ENCODE measurements at regions of chr21 and their contacts with region 1.

Region 1: GRCh38 chr21:15592271-15592860 is 137.4 kb upstream of the USP25 start:
- DNase-seq: no peak
- ATAC-seq: no peak

Region 2: GRCh38 chr21:14403681-14404318 is 1188.6 kb before region 1 on chr21:
- intact Hi-C with region 1: loop called in 1 of 2 experiments (anchors 5 kb)
- DNase-seq: no peak
- ATAC-seq: peak in 1 of 2 donors; percentile 47

Measured in left cardiac atrium (tissue), 4 donors.